B cell (primary cell): ENCODE measurements at regions of chr17 and their contacts with region 1.

Region 1: GRCh38 chr17:55348749-55349354 is 72.8 kb downstream of the MMD start:
- DNase-seq: peak; percentile 60
- ATAC-seq: peak; percentile 47
- H3K4me3 ChIP-seq: no peak overlapping the region
- H3K4me3 Mint-ChIP-seq: no peak overlapping the region
- H3K27ac ChIP-seq: no peak overlapping the region
- H3K27ac Mint-ChIP-seq: no peak overlapping the region
- H3K4me1 ChIP-seq: no peaks in the 10 kb centered on the region
- H3K4me1 Mint-ChIP-seq: peaks cover 3% of the 10 kb centered on the region
- H3K27me3 ChIP-seq: peaks cover 0 to 3% (median 0%) of the 10 kb centered on the region in 4 experiments
- H3K27me3 Mint-ChIP-seq: peaks cover 11% of the 10 kb centered on the region
- CTCF ChIP-seq: peak; percentile 93

Region 2: GRCh38 chr17:55363033-55363432 is 14.2 kb after region 1 on chr17:
- CTCF ChIA-PET with region 1: interaction called, 30 read pairs
- POLR2A ChIA-PET with region 1: no interaction called
- intact Hi-C with region 1: no loop called
- DNase-seq: no peak
- ATAC-seq: no peak
- H3K4me3 ChIP-seq: no peak overlapping the region
- H3K4me3 Mint-ChIP-seq: no peak overlapping the region
- H3K27ac ChIP-seq: no peak overlapping the region
- H3K27ac Mint-ChIP-seq: no peak overlapping the region
- H3K4me1 ChIP-seq: no peaks in the 10 kb centered on the region
- H3K4me1 Mint-ChIP-seq: no peaks in the 10 kb centered on the region
- H3K27me3 ChIP-seq: peaks cover 0 to 4% (median 2%) of the 10 kb centered on the region in 4 experiments
- H3K27me3 Mint-ChIP-seq: peaks cover 22% of the 10 kb centered on the region
- CTCF ChIP-seq: no peak